ENCODE measurements at regions of chr16 and their contacts with region 1.

Region 1: DNA sequence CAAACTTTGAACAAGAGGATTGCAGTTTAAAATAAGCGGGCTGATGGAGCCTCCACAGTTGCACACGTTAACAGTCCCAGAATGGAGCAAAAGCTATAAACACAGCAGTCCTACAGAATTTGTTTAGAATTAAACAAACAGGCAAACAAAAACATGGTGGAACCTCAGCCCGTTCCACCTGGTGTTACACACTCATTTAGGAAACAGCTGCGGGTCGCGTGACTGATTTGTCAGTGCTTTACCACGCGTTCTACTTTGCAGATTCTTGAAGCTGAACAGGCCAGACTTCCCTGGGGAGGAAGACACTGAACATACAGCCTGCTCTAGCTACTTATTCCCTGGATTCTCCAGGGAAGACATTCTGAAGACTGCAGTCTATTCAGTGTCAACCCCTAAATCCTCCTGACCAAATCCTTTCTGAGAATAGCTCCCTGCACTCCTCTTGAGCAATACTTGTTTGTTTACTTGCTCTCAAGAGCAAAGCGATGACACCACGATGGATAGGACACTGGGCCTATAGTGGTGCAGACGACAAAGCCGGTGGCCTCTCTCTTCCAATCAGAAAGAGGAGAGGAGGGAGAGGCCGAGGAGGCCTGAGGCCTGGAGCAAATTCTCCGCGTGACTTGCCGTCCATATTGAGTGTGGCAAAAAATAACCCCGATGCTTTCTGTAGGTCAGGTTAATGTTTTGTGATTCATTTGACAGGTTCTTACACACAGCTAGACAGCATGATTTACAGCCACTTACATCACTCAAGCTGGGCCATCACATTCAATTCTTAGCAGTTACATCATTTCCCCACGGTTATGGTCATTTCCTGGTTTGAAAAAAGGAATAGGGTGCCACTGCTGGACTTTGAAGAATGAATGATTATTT is 4.0 kb upstream of the MAP1LC3B start:
- DNase-seq: peak; percentile 92
- ATAC-seq: peak; percentile 74
- H3K4me3 Mint-ChIP-seq: peak overlapping the region; percentile 36
- H3K27ac Mint-ChIP-seq: peak overlapping the region; percentile 95
- H3K4me1 Mint-ChIP-seq: peaks cover 49% of the 10 kb centered on the region
- H3K27me3 Mint-ChIP-seq: no peaks in the 10 kb centered on the region

Region 2: DNA sequence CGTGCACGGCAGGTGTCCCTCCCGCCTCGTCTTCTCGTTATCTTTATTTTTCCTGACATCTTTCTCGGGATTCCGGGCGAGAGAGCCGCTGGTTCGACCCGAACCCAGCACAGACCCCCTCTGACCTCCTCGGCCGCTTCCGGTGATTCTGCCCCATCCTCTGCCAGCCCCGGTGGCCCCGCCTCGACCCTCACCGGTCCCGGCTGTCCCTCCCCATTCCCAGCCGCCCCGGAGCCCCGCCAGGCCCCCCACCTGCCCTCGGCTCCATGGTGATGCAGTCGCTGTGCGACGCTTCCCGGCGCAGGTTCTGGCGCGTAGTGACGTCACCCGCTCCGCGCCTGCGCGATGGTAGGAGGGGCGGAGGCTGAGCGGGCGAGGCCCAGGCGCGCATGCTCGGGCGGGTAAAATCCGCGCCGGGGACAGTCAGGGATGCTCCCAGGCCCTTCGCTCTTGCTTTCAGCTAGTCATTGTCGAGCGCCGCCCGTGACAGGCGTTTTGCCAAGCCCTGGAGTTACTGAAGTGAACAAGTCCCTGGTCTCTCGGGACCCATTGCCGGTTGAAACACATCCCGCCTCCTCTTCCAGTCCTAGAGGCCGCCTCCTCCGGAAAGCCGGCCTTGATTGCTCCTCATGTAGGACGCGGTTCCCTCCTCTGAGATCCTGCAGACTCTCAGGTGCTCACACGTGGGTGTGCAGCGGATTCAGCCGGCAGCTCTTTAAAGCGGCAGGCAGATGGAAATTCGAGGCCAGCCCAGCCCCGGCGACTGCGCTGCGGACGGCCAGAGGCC is 833.1 kb before region 1 on chr16 and contains the start of gene MTHFSD:
- CTCF ChIA-PET with region 1: no interaction called
- POLR2A ChIA-PET with region 1: no interaction called
- intact Hi-C with region 1: loop called in 1 of 2 experiments (anchors 1 kb)
- DNase-seq: peak; percentile 97
- ATAC-seq: peak; percentile 95
- H3K4me3 Mint-ChIP-seq: peak within 1 kb of the TSS; percentile 77
- H3K27ac Mint-ChIP-seq: peak within 1 kb of the TSS; percentile 93
- H3K4me1 Mint-ChIP-seq: peaks cover 13% of the 10 kb centered on the region
- H3K27me3 Mint-ChIP-seq: peaks cover 6% of the 10 kb centered on the region
- total RNA-seq, gene MTHFSD: 21.2 to 22.1 TPM

Region 3: GRCh38 chr16:87344931-87345631 is 43.1 kb before region 1 on chr16:
- CTCF ChIA-PET with region 1: no interaction called
- POLR2A ChIA-PET with region 1: no interaction called
- intact Hi-C with region 1: loop called in 1 of 2 experiments (anchors 5 kb)
- DNase-seq: peak; percentile 74
- ATAC-seq: peak; percentile 87
- H3K4me3 Mint-ChIP-seq: no peak overlapping the region
- H3K27ac Mint-ChIP-seq: peak overlapping the region; percentile 97
- H3K4me1 Mint-ChIP-seq: peaks cover 11% of the 10 kb centered on the region
- H3K27me3 Mint-ChIP-seq: no peaks in the 10 kb centered on the region

Region 4: GRCh38 chr16:87636072-87636684 is 248.0 kb after region 1 on chr16:
- CTCF ChIA-PET with region 1: interaction called, 3 read pairs
- POLR2A ChIA-PET with region 1: no interaction called
- intact Hi-C with region 1: loop called in 1 of 2 experiments (anchors 5 kb)
- DNase-seq: peak; percentile 93
- ATAC-seq: peak; percentile 93
- H3K4me3 Mint-ChIP-seq: peak overlapping the region; percentile 55
- H3K27ac Mint-ChIP-seq: no peak overlapping the region
- H3K4me1 Mint-ChIP-seq: peaks cover 12% of the 10 kb centered on the region
- H3K27me3 Mint-ChIP-seq: peaks cover 10% of the 10 kb centered on the region

Region 5: DNA sequence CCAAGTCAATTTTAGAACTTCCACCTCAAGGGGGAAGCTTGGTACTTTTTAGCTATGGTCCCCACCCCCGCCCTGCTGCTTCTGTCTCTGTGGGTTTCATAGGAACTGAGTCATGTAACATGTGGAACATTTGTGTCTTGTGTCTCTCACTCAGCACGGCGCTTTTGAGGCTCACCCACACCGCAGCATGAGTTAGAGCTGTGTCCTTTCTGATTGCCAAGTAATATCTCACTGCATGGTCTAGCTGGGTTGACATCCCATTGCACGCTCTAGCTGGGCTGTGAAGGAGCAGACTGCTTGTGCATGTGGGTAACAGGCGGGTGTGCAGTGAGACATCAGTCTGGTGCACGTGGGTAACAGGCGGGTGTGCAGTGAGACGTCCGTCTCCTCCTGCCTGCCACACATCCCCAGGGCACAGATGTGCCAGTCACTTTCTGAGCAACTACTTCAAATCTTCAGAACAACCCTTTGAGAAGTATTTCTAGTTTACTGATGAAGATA is 507.5 kb after region 1 on chr16:
- CTCF ChIA-PET with region 1: interaction called, 4 read pairs
- POLR2A ChIA-PET with region 1: no interaction called
- intact Hi-C with region 1: loop called in 1 of 2 experiments (anchors 2 kb)
- DNase-seq: peak; percentile 95
- ATAC-seq: peak; percentile 91
- H3K4me3 Mint-ChIP-seq: peak overlapping the region; percentile 44
- H3K27ac Mint-ChIP-seq: peak overlapping the region; percentile 99
- H3K4me1 Mint-ChIP-seq: peaks cover 56% of the 10 kb centered on the region
- H3K27me3 Mint-ChIP-seq: no peaks in the 10 kb centered on the region

Region 6: DNA sequence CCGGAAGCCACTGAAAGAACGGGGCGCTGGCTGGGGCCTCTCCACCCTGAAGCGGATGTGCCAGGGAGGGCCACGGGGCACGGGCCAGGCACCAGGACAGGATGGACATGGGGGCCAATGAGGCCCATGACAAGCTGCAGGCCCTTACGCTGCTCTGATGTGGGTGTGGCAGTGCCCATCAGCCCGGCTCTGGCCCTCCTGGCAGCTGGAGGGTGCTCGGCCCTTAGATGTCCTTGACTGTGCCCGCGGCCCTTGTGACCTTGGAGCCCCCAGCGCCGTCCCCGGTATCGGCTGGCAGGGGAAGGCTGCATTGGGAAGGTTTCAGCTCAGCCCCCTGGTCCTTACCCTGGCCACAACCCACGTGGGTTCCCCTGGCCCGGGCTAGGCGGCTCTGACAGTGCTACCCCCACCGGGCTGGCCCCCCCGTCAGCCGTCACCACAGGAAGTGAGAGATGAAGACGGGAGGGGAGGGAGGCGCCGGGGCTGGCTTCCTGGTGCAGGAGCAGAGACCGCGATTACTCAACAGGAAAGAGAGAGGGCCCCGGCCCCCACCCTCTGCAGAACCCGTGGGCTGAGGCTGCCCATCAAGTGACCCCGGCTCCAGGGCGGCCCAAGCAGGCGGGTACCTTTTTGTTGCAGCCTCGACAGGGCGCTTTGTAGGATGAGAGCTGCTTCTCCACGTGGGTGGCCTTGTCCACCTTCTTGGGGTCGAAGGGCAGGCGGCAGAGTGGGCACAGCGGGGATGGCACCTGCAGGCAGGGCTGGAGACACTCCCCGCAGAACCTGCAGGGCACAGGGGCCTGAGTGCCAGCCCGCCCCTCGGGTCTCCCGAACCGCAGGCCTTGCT is 1312.7 kb after region 1 on chr16:
- CTCF ChIA-PET with region 1: no interaction called
- POLR2A ChIA-PET with region 1: no interaction called
- intact Hi-C with region 1: loop called in 1 of 2 experiments (anchors 5 kb)
- DNase-seq: peak; percentile 98
- ATAC-seq: peak; percentile 80
- H3K4me3 Mint-ChIP-seq: peak overlapping the region; percentile 92
- H3K27ac Mint-ChIP-seq: peak overlapping the region; percentile 97
- H3K4me1 Mint-ChIP-seq: peaks cover 55% of the 10 kb centered on the region
- H3K27me3 Mint-ChIP-seq: no peaks in the 10 kb centered on the region